Caco-2 (cell line): ENCODE measurements at regions of chr13 and their contacts with region 1.

Region 1: GRCh38 chr13:20647758-20648157 is 55.7 kb upstream of the IL17D start:
- DNase-seq: no peak
- H3K4me3 ChIP-seq: no peak overlapping the region
- H3K4me3 Mint-ChIP-seq: no peak overlapping the region
- H3K27ac Mint-ChIP-seq: no peak overlapping the region
- H3K4me1 ChIP-seq: no peaks in the 10 kb centered on the region
- H3K4me1 Mint-ChIP-seq: no peaks in the 10 kb centered on the region
- H3K27me3 ChIP-seq: no peaks in the 10 kb centered on the region
- H3K27me3 Mint-ChIP-seq: no peaks in the 10 kb centered on the region
- CTCF ChIP-seq: no peak

Region 2: DNA sequence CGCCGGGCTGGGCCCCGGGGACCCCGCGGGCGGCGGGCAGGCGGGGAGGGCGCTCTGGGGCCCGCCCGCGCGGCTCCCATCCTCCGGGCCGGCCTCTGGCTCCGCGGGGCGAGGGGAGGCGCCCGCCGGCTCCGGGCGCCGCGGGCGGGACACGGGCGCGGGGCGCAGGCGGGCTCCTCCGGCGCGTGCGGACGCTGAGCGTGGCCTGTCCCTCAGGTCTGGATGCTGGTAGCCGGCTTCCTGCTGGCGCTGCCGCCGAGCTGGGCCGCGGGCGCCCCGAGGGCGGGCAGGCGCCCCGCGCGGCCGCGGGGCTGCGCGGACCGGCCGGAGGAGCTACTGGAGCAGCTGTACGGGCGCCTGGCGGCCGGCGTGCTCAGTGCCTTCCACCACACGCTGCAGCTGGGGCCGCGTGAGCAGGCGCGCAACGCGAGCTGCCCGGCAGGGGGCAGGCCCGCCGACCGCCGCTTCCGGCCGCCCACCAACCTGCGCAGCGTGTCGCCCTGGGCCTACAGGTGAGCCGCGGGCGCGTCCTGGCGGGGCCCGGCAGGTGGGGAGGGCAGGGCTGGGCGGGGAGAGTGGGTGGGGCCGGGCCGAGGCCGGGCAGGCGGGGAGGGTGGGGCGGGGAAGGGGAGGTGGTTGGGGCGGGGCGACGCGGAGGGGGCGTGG is 56.2 kb after region 1 on chr13:
- CTCF ChIA-PET with region 1: no interaction called
- POLR2A ChIA-PET with region 1: no interaction called
- intact Hi-C with region 1: loop called (anchors 10 kb)
- DNase-seq: peak; percentile 94 to 97
- H3K4me3 ChIP-seq: peak overlapping the region; percentile 92
- H3K4me3 Mint-ChIP-seq: peak overlapping the region; percentile 92
- H3K27ac Mint-ChIP-seq: no peak overlapping the region
- H3K4me1 ChIP-seq: peaks cover 15% of the 10 kb centered on the region
- H3K4me1 Mint-ChIP-seq: peaks cover 10% of the 10 kb centered on the region
- H3K27me3 ChIP-seq: no peaks in the 10 kb centered on the region
- H3K27me3 Mint-ChIP-seq: no peaks in the 10 kb centered on the region
- CTCF ChIP-seq: peak; percentile 56 to 74